CD4-positive, alpha-beta T cell (primary cell): ENCODE measurements at regions of chr12 and their contacts with region 1.

Region 1: DNA sequence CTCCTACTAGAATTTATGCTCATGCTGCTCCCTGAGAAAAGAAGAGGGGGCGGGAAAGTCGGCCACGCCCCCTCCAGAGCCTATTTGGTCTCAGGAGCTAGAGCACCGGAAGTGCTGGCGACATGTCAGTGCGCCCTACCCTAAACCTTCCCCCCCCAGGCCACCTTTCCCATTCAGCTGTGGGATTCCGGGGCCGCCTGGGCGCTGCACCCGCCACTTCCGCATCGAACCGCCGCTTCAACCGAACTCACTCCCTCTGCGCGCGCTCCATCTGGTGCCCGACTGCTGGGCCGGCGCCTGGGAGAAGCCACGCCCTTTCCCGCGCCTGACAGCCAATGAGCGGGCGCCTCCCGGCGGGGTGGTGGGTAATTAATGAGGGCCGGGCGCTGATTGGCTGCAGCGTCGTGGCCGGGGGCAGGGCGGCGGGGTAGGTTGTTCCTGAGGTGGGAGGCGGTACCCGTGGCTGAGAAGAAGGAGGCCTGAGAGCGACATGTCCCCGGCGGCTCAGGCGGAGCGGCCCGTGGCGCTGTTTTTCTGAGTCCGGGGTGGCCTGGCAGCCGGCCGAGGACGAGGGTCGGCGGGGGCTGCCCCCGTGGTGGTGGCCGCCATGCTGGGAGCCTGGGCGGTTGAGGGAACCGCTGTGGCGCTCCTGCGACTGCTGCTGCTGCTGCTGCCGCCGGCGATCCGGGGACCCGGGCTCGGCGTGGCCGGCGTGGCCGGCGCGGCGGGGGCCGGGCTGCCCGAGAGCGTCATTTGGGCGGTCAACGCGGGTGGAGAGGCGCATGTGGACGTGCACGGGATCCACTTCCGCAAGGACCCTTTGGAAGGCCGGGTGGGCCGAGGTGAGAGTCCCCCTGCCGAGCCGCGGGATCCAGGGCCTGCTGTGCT is at the start of gene MLEC:
- DNase-seq: peak; percentile 98 to 99 (median 99)
- ATAC-seq: peak; percentile 82
- H3K4me3 ChIP-seq: peak within 1 kb of the TSS; percentile 95
- H3K4me3 Mint-ChIP-seq: peak within 1 kb of the TSS; percentile 93
- H3K27ac ChIP-seq: peak within 1 kb of the TSS; percentile 75 to 96
- H3K27ac Mint-ChIP-seq: peak within 1 kb of the TSS; percentile 89
- H3K4me1 ChIP-seq: peaks cover 33% of the 10 kb centered on the region
- H3K4me1 Mint-ChIP-seq: peaks cover 50% of the 10 kb centered on the region
- H3K27me3 ChIP-seq: no peaks in the 10 kb centered on the region
- H3K27me3 Mint-ChIP-seq: no peaks in the 10 kb centered on the region
- CTCF ChIP-seq: no peak
- total RNA-seq, gene MLEC: 20.7 to 22.1 TPM

Region 2: DNA sequence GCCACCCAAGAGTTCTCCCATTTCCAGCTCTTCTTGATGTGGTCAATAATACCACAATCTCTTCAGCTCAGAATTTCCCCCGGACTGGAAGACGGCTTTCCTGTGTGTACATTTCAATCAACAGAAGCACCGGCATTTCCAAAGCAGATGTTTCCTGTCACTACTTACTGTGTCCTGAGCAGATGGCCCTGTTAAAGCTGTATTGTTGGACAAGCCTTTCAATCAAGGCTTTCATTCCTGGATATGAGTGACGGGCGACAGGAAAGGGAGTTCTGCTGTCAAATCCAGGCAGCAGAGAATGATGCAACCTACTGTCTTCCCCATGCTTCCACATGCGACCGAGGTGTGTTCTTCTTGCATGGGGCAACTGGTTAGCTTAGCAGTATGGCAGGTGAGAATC is 1428.8 kb before region 1 on chr12:
- CTCF ChIA-PET with region 1: no interaction called
- POLR2A ChIA-PET with region 1: no interaction called
- intact Hi-C with region 1: no loop called
- DNase-seq: no peak
- ATAC-seq: no peak
- H3K4me3 ChIP-seq: no peak overlapping the region
- H3K4me3 Mint-ChIP-seq: no peak overlapping the region
- H3K27ac ChIP-seq: no peak overlapping the region
- H3K27ac Mint-ChIP-seq: no peak overlapping the region
- H3K4me1 ChIP-seq: no peaks in the 10 kb centered on the region
- H3K4me1 Mint-ChIP-seq: no peaks in the 10 kb centered on the region
- H3K27me3 ChIP-seq: peaks cover 0 to 4% of the 10 kb centered on the region in 2 experiments
- H3K27me3 Mint-ChIP-seq: peaks cover 28% of the 10 kb centered on the region
- CTCF ChIP-seq: no peak

Region 3: DNA sequence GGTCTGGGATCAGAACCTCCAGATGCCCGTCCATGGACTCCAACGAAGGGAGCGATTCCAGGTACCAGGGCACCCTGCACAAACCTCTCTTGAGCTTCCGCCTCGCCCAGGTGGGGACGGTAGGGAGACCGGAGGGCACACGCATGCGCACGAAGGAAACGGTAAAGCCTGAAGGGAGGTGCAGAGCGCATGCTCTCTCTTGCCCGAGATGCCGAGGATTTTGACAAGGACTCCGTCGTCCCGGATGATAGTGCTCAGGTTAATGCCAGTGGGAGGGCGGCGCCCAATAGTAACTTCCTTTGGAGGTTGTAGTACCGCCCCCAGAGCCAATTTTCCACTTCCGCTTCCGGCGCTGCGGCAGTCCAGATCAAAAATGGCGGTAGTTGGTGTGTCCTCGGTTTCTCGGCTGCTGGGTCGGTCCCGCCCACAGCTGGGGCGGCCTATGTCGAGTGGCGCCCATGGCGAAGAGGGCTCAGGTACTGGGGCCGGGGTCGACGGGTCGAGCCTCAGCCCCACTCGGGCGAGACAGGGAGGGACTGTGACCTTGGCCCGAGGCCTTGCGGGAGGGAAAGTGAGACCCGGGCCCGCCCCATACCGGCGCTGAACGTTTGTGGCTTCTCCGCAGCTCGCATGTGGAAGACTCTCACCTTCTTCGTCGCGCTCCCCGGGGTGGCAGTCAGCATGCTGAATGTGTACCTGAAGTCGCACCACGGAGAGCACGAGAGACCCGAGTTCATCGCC is 249.0 kb before region 1 on chr12 and contains the start of gene COX6A1:
- CTCF ChIA-PET with region 1: no interaction called
- POLR2A ChIA-PET with region 1: no interaction called
- intact Hi-C with region 1: loop called in 1 of 2 experiments (anchors 2 kb)
- DNase-seq: peak; percentile 91 to 100 (median 96)
- ATAC-seq: peak; percentile 94
- H3K4me3 ChIP-seq: peak within 1 kb of the TSS; percentile 88
- H3K4me3 Mint-ChIP-seq: peak within 1 kb of the TSS; percentile 97
- H3K27ac ChIP-seq: peak within 1 kb of the TSS; percentile 69 to 88
- H3K27ac Mint-ChIP-seq: peak within 1 kb of the TSS; percentile 94
- H3K4me1 ChIP-seq: peaks cover 26% of the 10 kb centered on the region
- H3K4me1 Mint-ChIP-seq: peaks cover 31% of the 10 kb centered on the region
- H3K27me3 ChIP-seq: no peaks in the 10 kb centered on the region
- H3K27me3 Mint-ChIP-seq: no peaks in the 10 kb centered on the region
- CTCF ChIP-seq: no peak
- total RNA-seq, gene COX6A1: 112 to 116 TPM

Region 4: GRCh38 chr12:120554678-120555077 is 132.3 kb before region 1 on chr12:
- CTCF ChIA-PET with region 1: no interaction called
- POLR2A ChIA-PET with region 1: no interaction called
- intact Hi-C with region 1: no loop called
- DNase-seq: no peak
- ATAC-seq: no peak
- H3K4me3 ChIP-seq: no peak overlapping the region
- H3K4me3 Mint-ChIP-seq: no peak overlapping the region
- H3K27ac ChIP-seq: no peak overlapping the region
- H3K27ac Mint-ChIP-seq: peak overlapping the region; percentile 58
- H3K4me1 ChIP-seq: peaks cover 11% of the 10 kb centered on the region
- H3K4me1 Mint-ChIP-seq: peaks cover 15% of the 10 kb centered on the region
- H3K27me3 ChIP-seq: no peaks in the 10 kb centered on the region
- H3K27me3 Mint-ChIP-seq: no peaks in the 10 kb centered on the region
- CTCF ChIP-seq: no peak

Region 5: GRCh38 chr12:120662879-120663278 is 24.1 kb before region 1 on chr12:
- CTCF ChIA-PET with region 1: no interaction called
- POLR2A ChIA-PET with region 1: no interaction called
- intact Hi-C with region 1: no loop called
- DNase-seq: no peak
- ATAC-seq: no peak
- H3K4me3 ChIP-seq: no peak overlapping the region
- H3K4me3 Mint-ChIP-seq: no peak overlapping the region
- H3K27ac ChIP-seq: no peak overlapping the region
- H3K27ac Mint-ChIP-seq: no peak overlapping the region
- H3K4me1 ChIP-seq: no peaks in the 10 kb centered on the region
- H3K4me1 Mint-ChIP-seq: no peaks in the 10 kb centered on the region
- H3K27me3 ChIP-seq: no peaks in the 10 kb centered on the region
- H3K27me3 Mint-ChIP-seq: no peaks in the 10 kb centered on the region
- CTCF ChIP-seq: no peak

Region 6: DNA sequence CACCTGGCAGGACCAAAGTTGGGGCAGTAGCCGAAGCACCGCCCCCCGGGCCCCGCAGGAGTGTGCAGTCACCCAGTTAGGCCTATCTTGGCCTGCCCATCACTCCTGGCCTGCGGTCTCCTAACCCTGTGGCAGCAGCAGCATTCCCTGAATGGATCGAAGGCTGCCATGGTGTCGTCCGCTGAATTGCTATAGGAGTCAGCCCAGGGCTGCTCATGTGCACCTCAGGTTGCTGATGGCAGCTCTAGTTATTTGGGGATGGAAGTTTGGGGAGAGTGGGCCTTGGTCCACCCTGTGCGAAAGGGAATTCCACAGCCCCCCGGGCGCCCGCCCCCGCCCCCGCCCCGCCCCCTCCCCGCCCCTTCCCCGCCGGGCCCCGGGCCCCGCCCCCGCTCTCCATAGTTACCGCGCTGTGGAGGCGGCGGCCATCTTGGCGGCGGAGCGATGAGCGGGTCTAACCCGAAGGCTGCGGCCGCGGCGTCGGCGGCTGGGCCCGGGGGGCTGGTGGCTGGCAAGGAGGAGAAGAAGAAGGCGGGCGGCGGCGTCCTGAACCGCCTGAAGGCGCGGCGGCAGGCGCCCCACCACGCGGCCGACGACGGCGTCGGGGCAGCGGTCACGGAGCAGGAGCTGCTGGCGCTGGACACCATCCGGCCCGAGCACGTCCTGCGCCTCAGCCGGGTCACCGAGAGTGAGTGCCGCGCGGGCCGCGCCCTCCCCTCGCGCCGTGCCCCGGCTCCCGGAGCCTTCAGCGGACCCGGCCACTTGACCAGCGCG is 23.3 kb after region 1 on chr12 and contains the start of gene UNC119B:
- CTCF ChIA-PET with region 1: no interaction called
- POLR2A ChIA-PET with region 1: interaction called, 9 read pairs
- intact Hi-C with region 1: loop called (anchors 1 kb)
- DNase-seq: peak; percentile 57 to 87 (median 70)
- ATAC-seq: peak; percentile 86
- H3K4me3 ChIP-seq: peak within 1 kb of the TSS; percentile 83
- H3K4me3 Mint-ChIP-seq: peak within 1 kb of the TSS; percentile 96
- H3K27ac ChIP-seq: peak within 1 kb of the TSS; percentile 13 to 58
- H3K27ac Mint-ChIP-seq: peak within 1 kb of the TSS; percentile 86
- H3K4me1 ChIP-seq: peaks cover 30% of the 10 kb centered on the region
- H3K4me1 Mint-ChIP-seq: peaks cover 42% of the 10 kb centered on the region
- H3K27me3 ChIP-seq: no peaks in the 10 kb centered on the region
- H3K27me3 Mint-ChIP-seq: no peaks in the 10 kb centered on the region
- CTCF ChIP-seq: no peak
- total RNA-seq, gene UNC119B: 10.7 TPM

Region 7: GRCh38 chr12:120904197-120904773 is 217.4 kb after region 1 on chr12 and contains the start of gene SPPL3:
- CTCF ChIA-PET with region 1: no interaction called
- POLR2A ChIA-PET with region 1: no interaction called
- intact Hi-C with region 1: loop called in 1 of 2 experiments (anchors 5 kb)
- DNase-seq: peak; percentile 80 to 96 (median 91)
- ATAC-seq: peak; percentile 77
- H3K4me3 ChIP-seq: peak within 1 kb of the TSS; percentile 84
- H3K4me3 Mint-ChIP-seq: peak within 1 kb of the TSS; percentile 99
- H3K27ac ChIP-seq: peak within 1 kb of the TSS; percentile 68 to 72
- H3K27ac Mint-ChIP-seq: peak within 1 kb of the TSS; percentile 93
- H3K4me1 ChIP-seq: peaks cover 30% of the 10 kb centered on the region
- H3K4me1 Mint-ChIP-seq: peaks cover 37% of the 10 kb centered on the region
- H3K27me3 ChIP-seq: no peaks in the 10 kb centered on the region
- H3K27me3 Mint-ChIP-seq: no peaks in the 10 kb centered on the region
- CTCF ChIP-seq: no peak
- total RNA-seq, gene SPPL3: 38.3 to 43.4 TPM

Region 8: GRCh38 chr12:121240484-121241101 is 553.7 kb after region 1 on chr12:
- CTCF ChIA-PET with region 1: no interaction called
- POLR2A ChIA-PET with region 1: no interaction called
- intact Hi-C with region 1: loop called in 1 of 2 experiments (anchors 5 kb)
- DNase-seq: peak; percentile 84 to 99 (median 92)
- ATAC-seq: peak; percentile 92
- H3K4me3 ChIP-seq: peak overlapping the region; percentile 47
- H3K4me3 Mint-ChIP-seq: peak overlapping the region; percentile 90
- H3K27ac ChIP-seq: peak overlapping the region; percentile 86 to 88
- H3K27ac Mint-ChIP-seq: peak overlapping the region; percentile 100
- H3K4me1 ChIP-seq: peaks cover 45% of the 10 kb centered on the region
- H3K4me1 Mint-ChIP-seq: peaks cover 51% of the 10 kb centered on the region
- H3K27me3 ChIP-seq: no peaks in the 10 kb centered on the region
- H3K27me3 Mint-ChIP-seq: no peaks in the 10 kb centered on the region
- CTCF ChIP-seq: no peak